ENCODE measurements at regions of chr1 and their contacts with region 1.

Region 1: GRCh38 chr1:156090822-156091188 is 8.5 kb upstream of the MEX3A start:
- DNase-seq: peak in 1 of 2 donors; percentile 77
- ATAC-seq: peak; percentile 90 to 94
- H3K4me3 ChIP-seq: no peak overlapping the region
- H3K27ac ChIP-seq: no peak overlapping the region
- H3K4me1 ChIP-seq: no peaks in the 10 kb centered on the region
- H3K27me3 ChIP-seq: no peaks in the 10 kb centered on the region
- CTCF ChIP-seq: peak; percentile 69 to 94 (median 90)
- POLR2A ChIP-seq: no peak

Region 2: DNA sequence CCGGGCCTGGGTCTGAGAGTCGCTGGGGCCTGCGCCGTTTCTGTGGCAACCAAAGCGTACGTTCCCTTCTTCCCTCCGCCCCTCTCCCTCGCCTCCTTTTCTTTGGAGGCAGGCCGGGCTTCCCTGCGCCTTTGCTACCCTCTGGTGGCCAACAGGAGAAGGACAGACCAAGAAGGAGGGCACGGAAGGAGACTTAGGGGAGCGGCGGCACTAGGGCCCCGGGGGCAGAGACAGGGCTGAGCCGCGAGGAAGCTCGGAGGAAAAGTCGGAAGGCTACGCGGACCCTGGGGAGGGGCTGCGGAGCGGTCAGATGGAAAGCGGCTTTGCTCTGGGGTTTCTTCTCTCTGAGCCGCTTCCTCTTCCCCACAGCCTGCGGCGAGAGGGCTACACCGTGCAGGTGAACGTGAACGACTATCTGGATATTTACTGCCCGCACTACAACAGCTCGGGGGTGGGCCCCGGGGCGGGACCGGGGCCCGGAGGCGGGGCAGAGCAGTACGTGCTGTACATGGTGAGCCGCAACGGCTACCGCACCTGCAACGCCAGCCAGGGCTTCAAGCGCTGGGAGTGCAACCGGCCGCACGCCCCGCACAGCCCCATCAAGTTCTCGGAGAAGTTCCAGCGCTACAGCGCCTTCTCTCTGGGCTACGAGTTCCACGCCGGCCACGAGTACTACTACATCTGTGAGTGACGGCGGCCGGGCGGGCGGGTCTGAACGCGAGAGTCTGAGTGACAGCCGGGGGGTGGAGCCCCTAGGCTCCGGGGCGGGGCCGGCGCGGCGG is 1005.9 kb before region 1 on chr1:
- in situ Hi-C with region 1: no loop called
- intact Hi-C with region 1: no loop called
- DNase-seq: peak; percentile 83 to 89
- ATAC-seq: peak; percentile 87 to 89
- H3K4me3 ChIP-seq: peak overlapping the region; percentile 57 to 85 (median 72)
- H3K27ac ChIP-seq: peak overlapping the region; percentile 87 to 95 (median 89)
- H3K4me1 ChIP-seq: peaks cover 32 to 43% of the 10 kb centered on the region in 2 donors
- H3K27me3 ChIP-seq: peaks cover 40 to 45% (median 44%) of the 10 kb centered on the region in 3 donors
- CTCF ChIP-seq: peak; percentile 90 to 97 (median 95)
- POLR2A ChIP-seq: peak; percentile 50 to 87

Region 3: DNA sequence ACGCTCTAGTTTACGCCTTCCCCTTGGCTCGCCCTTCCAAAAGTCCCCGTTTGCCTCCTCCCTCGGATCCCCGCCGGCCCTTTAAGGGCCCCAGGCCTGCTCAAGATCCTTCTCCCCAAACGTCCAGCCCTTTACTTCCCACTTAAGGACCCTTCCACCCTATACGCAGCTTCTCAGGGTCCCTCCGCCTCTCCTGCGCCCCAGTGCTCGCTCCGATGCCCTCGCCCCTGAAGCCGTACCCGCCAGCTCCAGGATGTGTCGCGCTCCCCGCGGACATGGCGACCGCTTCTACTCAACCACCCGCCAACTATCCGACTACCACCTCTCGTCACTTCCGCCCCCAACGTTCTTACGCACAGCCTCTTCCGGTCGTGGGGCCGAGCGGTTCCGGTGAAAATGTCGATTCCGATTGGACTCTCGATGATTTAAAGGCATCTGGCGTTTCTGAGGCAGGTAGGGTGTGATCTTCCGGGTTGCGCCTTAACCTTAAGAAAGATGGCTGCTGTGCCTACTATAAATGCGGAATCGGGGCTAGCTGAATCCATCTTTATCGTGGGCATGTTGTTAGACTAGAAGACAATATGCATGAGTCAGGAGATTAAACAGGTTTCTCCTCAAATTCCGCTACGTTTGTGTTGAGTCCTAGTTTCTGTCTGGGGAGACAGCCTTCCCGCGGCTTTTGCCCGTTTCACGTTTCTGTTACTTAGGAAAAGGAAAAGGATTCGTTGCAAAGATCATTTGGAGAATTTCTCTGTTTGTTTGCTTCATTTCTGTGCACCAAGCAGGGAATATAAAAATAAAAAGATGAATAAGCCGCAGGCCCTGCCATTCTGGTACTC is 156.5 kb before region 1 on chr1 and contains the start of gene KHDC4:
- in situ Hi-C with region 1: no loop called
- intact Hi-C with region 1: no loop called
- DNase-seq: peak; percentile 95 to 96
- ATAC-seq: peak; percentile 99 to 100
- H3K4me3 ChIP-seq: peak within 1 kb of the TSS; percentile 85 to 96 (median 90)
- H3K27ac ChIP-seq: peak within 1 kb of the TSS; percentile 93 to 95 (median 94)
- H3K4me1 ChIP-seq: peaks cover 47 to 51% of the 10 kb centered on the region in 2 donors
- H3K27me3 ChIP-seq: no peaks in the 10 kb centered on the region
- CTCF ChIP-seq: peak in 3 of 5 experiments; percentile 24 to 36 (median 26)
- POLR2A ChIP-seq: peak; percentile 91 to 96
- total RNA-seq, gene KHDC4: 18.2 to 46.3 (median 26.3) TPM

Region 4: DNA sequence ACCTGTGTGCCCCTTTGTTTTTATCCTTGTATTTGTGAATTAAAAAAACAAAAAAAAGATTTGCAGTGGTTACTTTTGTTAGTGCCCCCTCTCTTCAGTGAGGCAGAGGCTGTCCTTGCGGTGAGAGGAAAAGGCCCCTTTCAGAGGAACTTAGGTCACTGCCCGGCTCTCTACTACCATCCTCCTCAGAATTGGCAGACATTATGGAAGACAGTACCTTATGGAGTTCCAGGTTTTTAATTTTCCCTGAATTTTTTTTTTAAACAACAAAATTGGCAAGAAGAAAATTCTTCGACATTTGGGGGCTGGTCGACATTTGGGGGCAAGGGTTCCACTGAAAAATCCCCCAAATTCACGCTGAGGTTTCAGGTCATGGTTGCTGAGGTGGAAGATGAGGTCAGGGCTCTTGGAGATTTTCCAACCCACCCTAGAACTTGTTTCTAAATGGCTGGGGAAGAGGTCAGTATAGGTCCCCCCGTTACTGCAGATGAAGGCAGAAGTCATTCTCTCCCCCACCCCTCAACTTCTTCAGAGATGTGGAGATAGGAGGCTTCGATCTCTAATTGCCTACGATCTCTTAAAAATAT is 144.1 kb before region 1 on chr1:
- in situ Hi-C with region 1: no loop called
- intact Hi-C with region 1: no loop called
- DNase-seq: no peak
- ATAC-seq: no peak
- H3K4me3 ChIP-seq: no peak overlapping the region
- H3K27ac ChIP-seq: no peak overlapping the region
- H3K4me1 ChIP-seq: peaks cover 2 to 6% of the 10 kb centered on the region in 2 donors
- H3K27me3 ChIP-seq: no peaks in the 10 kb centered on the region
- CTCF ChIP-seq: no peak
- POLR2A ChIP-seq: no peak

Region 5: GRCh38 chr1:156129706-156130581 is 39.1 kb after region 1 on chr1:
- in situ Hi-C with region 1: loop called (anchors 5 kb)
- intact Hi-C with region 1: loop called (anchors 1 kb)
- DNase-seq: peak; percentile 64 to 88
- ATAC-seq: peak; percentile 59 to 79
- H3K4me3 ChIP-seq: peak overlapping the region in 2 of 4 donors; percentile 8 to 42
- H3K27ac ChIP-seq: peak overlapping the region; percentile 98 to 99 (median 98)
- H3K4me1 ChIP-seq: peaks cover 53 to 59% of the 10 kb centered on the region in 2 donors
- H3K27me3 ChIP-seq: no peaks in the 10 kb centered on the region
- CTCF ChIP-seq: peak; percentile 98 to 99 (median 99)
- POLR2A ChIP-seq: no peak